Activated B cell treated with CpG ODN at 0.5 μM for 24 hours (primary cell): ENCODE measurements at regions of chr7 and their contacts with region 1.

Region 1: GRCh38 chr7:92042056-92042737 is 92.1 kb downstream of the CYP51A1 start:
- DNase-seq: no peak
- ATAC-seq: no peak
- H3K4me3 Mint-ChIP-seq: no peak overlapping the region
- H3K27ac Mint-ChIP-seq: no peak overlapping the region
- H3K4me1 Mint-ChIP-seq: no peaks in the 10 kb centered on the region
- H3K27me3 Mint-ChIP-seq: no peaks in the 10 kb centered on the region
- CTCF ChIP-seq: no peak

Region 2: GRCh38 chr7:91973639-91974038 is 68.6 kb before region 1 on chr7:
- CTCF ChIA-PET with region 1: no interaction called
- POLR2A ChIA-PET with region 1: interaction called, 16 read pairs
- intact Hi-C with region 1: no loop called
- DNase-seq: no peak
- ATAC-seq: no peak
- H3K4me3 Mint-ChIP-seq: no peak overlapping the region
- H3K27ac Mint-ChIP-seq: no peak overlapping the region
- H3K4me1 Mint-ChIP-seq: peaks cover 12% of the 10 kb centered on the region
- H3K27me3 Mint-ChIP-seq: no peaks in the 10 kb centered on the region
- CTCF ChIP-seq: no peak

Region 3: DNA sequence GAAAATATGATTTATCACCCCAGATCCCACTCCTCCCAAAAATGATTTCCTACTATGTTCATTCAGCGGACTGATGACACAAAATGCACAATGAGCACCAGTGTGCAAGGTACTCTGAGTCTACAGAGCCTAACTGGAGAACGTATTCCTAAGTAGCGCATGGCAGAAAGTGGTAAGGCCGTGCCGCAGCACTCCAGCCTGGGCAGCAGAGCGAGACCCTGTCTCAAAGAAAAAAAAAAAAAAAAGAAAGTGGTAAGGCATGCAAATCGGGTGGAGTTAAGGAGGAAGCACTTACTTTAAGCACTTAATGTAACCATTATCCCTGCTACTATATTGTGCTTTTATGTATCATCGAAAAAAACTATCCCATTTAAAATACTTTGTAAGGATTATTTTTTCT is 66.6 kb after region 1 on chr7:
- CTCF ChIA-PET with region 1: no interaction called
- POLR2A ChIA-PET with region 1: no interaction called
- intact Hi-C with region 1: no loop called
- DNase-seq: no peak
- ATAC-seq: peak; percentile 49
- H3K4me3 Mint-ChIP-seq: no peak overlapping the region
- H3K27ac Mint-ChIP-seq: no peak overlapping the region
- H3K4me1 Mint-ChIP-seq: peaks cover 15% of the 10 kb centered on the region
- H3K27me3 Mint-ChIP-seq: no peaks in the 10 kb centered on the region
- CTCF ChIP-seq: no peak

Region 4: GRCh38 chr7:92366730-92367129 is 324.5 kb after region 1 on chr7:
- CTCF ChIA-PET with region 1: no interaction called
- POLR2A ChIA-PET with region 1: no interaction called
- intact Hi-C with region 1: no loop called
- DNase-seq: no peak
- ATAC-seq: no peak
- H3K4me3 Mint-ChIP-seq: no peak overlapping the region
- H3K27ac Mint-ChIP-seq: no peak overlapping the region
- H3K4me1 Mint-ChIP-seq: no peaks in the 10 kb centered on the region
- H3K27me3 Mint-ChIP-seq: no peaks in the 10 kb centered on the region
- CTCF ChIP-seq: no peak